ENCODE measurements at regions of chr10 and their contacts with region 1.

Region 1: DNA sequence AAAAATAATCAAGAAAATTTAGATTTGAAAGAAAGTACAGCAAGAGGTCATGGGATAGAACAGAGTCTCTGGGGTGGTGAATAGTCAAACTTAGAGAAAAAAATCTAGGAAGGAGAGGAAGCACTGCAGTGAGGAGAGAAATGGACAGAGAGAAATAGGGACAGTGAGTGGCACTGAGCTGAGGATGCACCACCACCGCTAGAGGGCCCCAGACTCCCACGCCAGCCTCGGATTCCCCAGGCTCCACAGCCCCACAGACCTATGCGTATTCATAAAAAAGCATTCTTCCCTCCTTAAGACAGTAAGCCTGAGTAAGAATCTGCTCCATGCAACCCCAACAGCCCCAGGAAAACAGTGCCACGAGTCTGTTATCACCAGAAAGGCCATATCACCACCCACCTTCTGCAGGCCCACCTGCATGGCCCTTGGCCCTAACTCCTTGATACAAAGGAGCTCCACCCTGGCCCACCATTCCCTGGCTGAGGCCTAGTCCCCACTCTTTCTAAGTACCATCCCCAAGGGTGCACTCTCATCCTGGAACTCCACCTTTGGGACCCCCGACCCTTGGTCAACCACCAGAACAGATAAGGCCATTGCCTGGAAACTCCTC is 91.0 kb downstream of the ALOX5 start:
- DNase-seq: peak; percentile 60 to 85 (median 78)
- ATAC-seq: peak; percentile 96
- H3K4me3 ChIP-seq: no peak overlapping the region
- H3K4me3 Mint-ChIP-seq: no peak overlapping the region
- H3K27ac ChIP-seq: no peak overlapping the region
- H3K27ac Mint-ChIP-seq: no peak overlapping the region
- H3K4me1 ChIP-seq: peaks cover 12% of the 10 kb centered on the region
- H3K4me1 Mint-ChIP-seq: peaks cover 25% of the 10 kb centered on the region
- H3K27me3 ChIP-seq: no peaks in the 10 kb centered on the region
- H3K27me3 Mint-ChIP-seq: no peaks in the 10 kb centered on the region
- CTCF ChIP-seq: peak; percentile 93

Region 2: DNA sequence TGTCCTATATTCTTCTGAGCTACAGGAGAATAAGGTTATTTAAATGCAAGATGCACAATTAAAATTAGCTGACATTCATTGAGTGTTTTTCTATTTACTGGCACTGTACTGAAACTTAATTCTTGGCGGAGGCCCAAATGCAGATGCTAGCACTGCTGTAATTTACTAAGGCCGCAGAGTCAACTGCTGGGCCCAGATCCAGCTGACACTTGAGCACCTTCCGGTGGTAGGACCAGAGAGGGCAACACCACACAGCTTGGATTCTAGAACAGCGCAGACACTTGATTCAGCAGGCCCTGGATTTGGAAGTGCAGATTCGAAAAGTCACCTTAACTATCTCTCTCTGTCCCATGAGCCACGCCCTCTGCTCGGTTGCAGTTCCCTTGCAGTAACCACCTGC is 782.6 kb before region 1 on chr10:
- CTCF ChIA-PET with region 1: no interaction called
- POLR2A ChIA-PET with region 1: no interaction called
- intact Hi-C with region 1: no loop called
- DNase-seq: no peak
- ATAC-seq: no peak
- H3K4me3 ChIP-seq: no peak overlapping the region
- H3K4me3 Mint-ChIP-seq: no peak overlapping the region
- H3K27ac ChIP-seq: no peak overlapping the region
- H3K27ac Mint-ChIP-seq: no peak overlapping the region
- H3K4me1 ChIP-seq: no peaks in the 10 kb centered on the region
- H3K4me1 Mint-ChIP-seq: no peaks in the 10 kb centered on the region
- H3K27me3 ChIP-seq: no peaks in the 10 kb centered on the region
- H3K27me3 Mint-ChIP-seq: peaks cover 2% of the 10 kb centered on the region
- CTCF ChIP-seq: no peak

Region 3: DNA sequence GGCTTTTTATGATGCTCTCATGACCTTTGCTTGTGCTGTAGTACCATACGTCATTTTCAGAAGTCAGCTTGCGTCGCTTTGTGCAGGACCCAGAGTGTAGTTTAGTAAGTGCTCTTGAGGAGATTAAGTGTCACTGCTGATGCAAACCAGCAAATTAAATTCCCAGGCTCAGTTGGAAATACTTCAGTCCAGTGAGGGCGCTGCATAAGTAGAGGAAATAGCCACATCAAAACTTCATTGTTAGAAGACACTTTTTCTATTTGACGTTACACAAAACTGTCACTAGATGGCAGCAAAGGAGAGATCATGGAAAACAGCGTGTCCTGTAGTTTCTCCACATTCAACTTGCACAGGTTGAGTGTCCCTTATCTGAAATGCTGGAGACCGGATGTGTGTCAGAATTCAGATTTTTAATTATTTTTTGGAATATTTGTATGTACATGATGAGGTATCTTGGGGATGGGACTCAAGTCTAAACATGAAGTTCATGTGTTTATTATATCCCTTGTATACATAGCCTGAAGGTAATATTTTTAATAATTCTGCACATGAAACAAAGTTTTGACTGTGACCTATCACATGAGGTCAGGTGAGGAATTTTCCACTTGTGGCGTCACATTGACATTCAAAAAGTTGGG is 456.4 kb before region 1 on chr10:
- CTCF ChIA-PET with region 1: no interaction called
- POLR2A ChIA-PET with region 1: no interaction called
- intact Hi-C with region 1: loop called (anchors 10 kb)
- DNase-seq: peak in 4 of 9 experiments; percentile 9 to 81 (median 45)
- ATAC-seq: peak; percentile 88
- H3K4me3 ChIP-seq: no peak overlapping the region
- H3K4me3 Mint-ChIP-seq: no peak overlapping the region
- H3K27ac ChIP-seq: no peak overlapping the region
- H3K27ac Mint-ChIP-seq: no peak overlapping the region
- H3K4me1 ChIP-seq: no peaks in the 10 kb centered on the region
- H3K4me1 Mint-ChIP-seq: peaks cover 4% of the 10 kb centered on the region
- H3K27me3 ChIP-seq: no peaks in the 10 kb centered on the region
- H3K27me3 Mint-ChIP-seq: no peaks in the 10 kb centered on the region
- CTCF ChIP-seq: peak; percentile 84

Region 4: GRCh38 chr10:45163315-45163975 is 301.6 kb before region 1 on chr10:
- CTCF ChIA-PET with region 1: no interaction called
- POLR2A ChIA-PET with region 1: no interaction called
- intact Hi-C with region 1: no loop called
- DNase-seq: no peak
- ATAC-seq: no peak
- H3K4me3 ChIP-seq: no peak overlapping the region
- H3K4me3 Mint-ChIP-seq: no peak overlapping the region
- H3K27ac ChIP-seq: no peak overlapping the region
- H3K27ac Mint-ChIP-seq: no peak overlapping the region
- H3K4me1 ChIP-seq: no peaks in the 10 kb centered on the region
- H3K4me1 Mint-ChIP-seq: no peaks in the 10 kb centered on the region
- H3K27me3 ChIP-seq: no peaks in the 10 kb centered on the region
- H3K27me3 Mint-ChIP-seq: no peaks in the 10 kb centered on the region
- CTCF ChIP-seq: no peak

Region 5: GRCh38 chr10:45249978-45250693 is 214.9 kb before region 1 on chr10:
- CTCF ChIA-PET with region 1: interaction called, 4 read pairs
- POLR2A ChIA-PET with region 1: no interaction called
- intact Hi-C with region 1: loop called (anchors 5 to 10 kb)
- DNase-seq: peak in 2 of 9 experiments; percentile 48 to 68
- ATAC-seq: peak; percentile 36
- H3K4me3 ChIP-seq: no peak overlapping the region
- H3K4me3 Mint-ChIP-seq: no peak overlapping the region
- H3K27ac ChIP-seq: no peak overlapping the region
- H3K27ac Mint-ChIP-seq: no peak overlapping the region
- H3K4me1 ChIP-seq: peaks cover 4% of the 10 kb centered on the region
- H3K4me1 Mint-ChIP-seq: peaks cover 4% of the 10 kb centered on the region
- H3K27me3 ChIP-seq: no peaks in the 10 kb centered on the region
- H3K27me3 Mint-ChIP-seq: peaks cover 4% of the 10 kb centered on the region
- CTCF ChIP-seq: peak; percentile 64

Region 6: DNA sequence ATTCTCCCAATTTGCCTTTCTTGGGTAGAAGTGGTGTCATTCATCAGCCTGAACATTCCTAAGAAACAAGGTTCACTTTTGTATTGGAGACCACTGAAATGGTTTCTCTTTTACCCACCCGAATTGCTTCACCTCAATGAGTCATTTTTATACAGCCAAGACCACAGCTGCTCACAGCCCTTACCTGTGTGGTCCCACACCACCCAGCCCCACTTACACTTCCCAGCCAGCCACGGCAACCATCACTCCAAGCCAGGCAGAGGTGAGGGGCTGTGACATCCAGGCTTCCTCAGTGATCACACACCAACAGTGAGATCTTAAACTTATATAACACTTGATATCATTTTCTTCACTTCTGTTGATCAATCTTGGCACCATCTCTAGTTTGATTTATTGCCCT is 170.4 kb before region 1 on chr10:
- CTCF ChIA-PET with region 1: no interaction called
- POLR2A ChIA-PET with region 1: no interaction called
- intact Hi-C with region 1: no loop called
- DNase-seq: no peak
- ATAC-seq: no peak
- H3K4me3 ChIP-seq: no peak overlapping the region
- H3K4me3 Mint-ChIP-seq: no peak overlapping the region
- H3K27ac ChIP-seq: no peak overlapping the region
- H3K27ac Mint-ChIP-seq: no peak overlapping the region
- H3K4me1 ChIP-seq: no peaks in the 10 kb centered on the region
- H3K4me1 Mint-ChIP-seq: no peaks in the 10 kb centered on the region
- H3K27me3 ChIP-seq: peaks cover 0 to 3% of the 10 kb centered on the region in 2 experiments
- H3K27me3 Mint-ChIP-seq: no peaks in the 10 kb centered on the region
- CTCF ChIP-seq: no peak

Region 7: DNA sequence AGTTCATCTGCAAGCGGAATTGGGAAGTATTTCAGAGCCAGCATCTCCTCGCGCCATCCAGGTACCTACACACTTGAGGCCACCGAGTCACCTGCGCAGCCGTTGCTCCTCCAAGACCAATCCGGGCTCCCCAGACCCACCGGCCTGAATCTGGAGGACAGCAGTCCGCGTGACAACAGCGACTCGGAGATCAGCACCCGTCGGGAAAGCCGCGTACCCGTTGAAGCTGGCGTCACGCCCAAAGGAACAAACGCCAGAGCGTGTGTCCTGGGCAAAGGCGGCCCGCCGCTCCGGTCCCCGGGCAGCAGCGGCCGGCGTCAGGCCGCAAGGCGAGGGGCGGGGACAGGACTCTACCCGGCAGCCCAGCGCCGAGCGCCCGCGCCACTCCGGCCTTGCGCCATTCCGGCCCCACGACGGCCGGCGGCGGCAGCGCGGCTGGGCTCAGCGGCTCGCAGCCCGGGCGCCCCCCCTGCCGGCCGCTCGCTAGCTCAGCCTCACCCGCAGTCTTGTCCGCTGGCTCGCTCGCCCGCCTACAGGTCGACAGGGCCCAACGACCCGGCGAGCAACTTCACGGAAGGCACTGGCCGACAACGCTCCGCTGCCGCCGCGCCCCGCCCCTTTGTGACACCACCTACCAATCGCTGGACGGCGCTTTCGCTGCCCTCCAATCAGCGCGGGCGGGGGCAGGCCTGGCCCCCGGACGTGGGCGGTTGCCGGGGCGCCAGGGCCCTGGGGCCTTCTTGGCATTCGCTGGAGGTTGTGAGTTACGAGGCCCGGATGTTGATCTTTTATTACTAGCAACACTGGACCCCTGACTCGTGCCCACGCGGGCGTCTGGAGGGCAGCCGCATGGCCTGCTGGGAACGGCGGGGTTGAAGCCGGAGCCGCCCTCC is 207.4 kb after region 1 on chr10 and contains the start of gene ZFAND4:
- CTCF ChIA-PET with region 1: interaction called, 6 read pairs
- POLR2A ChIA-PET with region 1: interaction called, 4 read pairs
- intact Hi-C with region 1: loop called in 1 of 2 experiments (anchors 1 kb)
- DNase-seq: peak; percentile 88 to 98 (median 93)
- ATAC-seq: peak; percentile 97
- H3K4me3 ChIP-seq: peak within 1 kb of the TSS; percentile 82 to 88
- H3K4me3 Mint-ChIP-seq: peak within 1 kb of the TSS; percentile 90
- H3K27ac ChIP-seq: peak within 1 kb of the TSS; percentile 69 to 86
- H3K27ac Mint-ChIP-seq: peak within 1 kb of the TSS; percentile 90
- H3K4me1 ChIP-seq: peaks cover 5% of the 10 kb centered on the region
- H3K4me1 Mint-ChIP-seq: peaks cover 45% of the 10 kb centered on the region
- H3K27me3 ChIP-seq: no peaks in the 10 kb centered on the region
- H3K27me3 Mint-ChIP-seq: no peaks in the 10 kb centered on the region
- CTCF ChIP-seq: peak; percentile 20
- total RNA-seq, gene ZFAND4: 34.7 to 36.6 TPM

Measured in CD8-positive, alpha-beta T cell (primary cell).